ENCODE measurements at regions of chr3 and their contacts with region 1.

Region 1: GRCh38 chr3:111978493-111979433 is at the start of gene ABHD10:
- DNase-seq: peak; percentile 92
- CTCF ChIP-seq: no peak

Region 2: DNA sequence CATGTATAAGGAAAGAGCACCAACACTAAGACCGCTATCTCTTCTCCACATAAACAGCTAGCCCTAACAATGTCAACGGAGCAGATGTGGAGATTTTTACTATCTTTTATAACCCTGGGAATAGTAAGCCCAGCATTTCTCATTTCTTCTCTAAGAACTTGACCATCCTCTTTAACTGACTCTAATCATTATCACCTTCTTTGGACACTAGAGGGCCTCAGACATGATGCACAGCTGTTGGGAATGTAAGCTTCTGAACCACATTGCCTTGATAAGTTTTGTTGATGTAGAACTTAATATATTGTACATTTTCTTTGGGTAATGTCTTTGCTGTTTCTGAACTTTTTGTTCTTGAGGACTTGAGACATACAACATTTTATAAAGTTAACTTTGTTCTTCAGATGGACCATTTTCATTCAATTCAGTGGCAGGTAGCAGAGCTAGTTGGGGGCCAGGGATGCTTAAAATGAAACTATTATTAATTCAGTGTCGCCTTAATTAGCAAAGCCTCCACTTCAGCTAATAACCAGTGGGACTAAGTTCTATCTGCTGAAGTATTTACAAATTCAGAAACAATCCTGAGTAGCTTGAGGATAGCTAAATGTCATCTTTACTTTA is 10.4 kb after region 1 on chr3:
- CTCF ChIA-PET with region 1: interaction called, 31 read pairs
- POLR2A ChIA-PET with region 1: interaction called, 3 read pairs
- DNase-seq: peak; percentile 41
- CTCF ChIP-seq: peak; percentile 85

Region 3: GRCh38 chr3:112136959-112137693 is 158.4 kb after region 1 on chr3:
- CTCF ChIA-PET with region 1: no interaction called
- POLR2A ChIA-PET with region 1: no interaction called
- DNase-seq: no peak
- CTCF ChIP-seq: peak; percentile 72